ENCODE measurements at regions of chr10 and their contacts with region 1.

Region 1: DNA sequence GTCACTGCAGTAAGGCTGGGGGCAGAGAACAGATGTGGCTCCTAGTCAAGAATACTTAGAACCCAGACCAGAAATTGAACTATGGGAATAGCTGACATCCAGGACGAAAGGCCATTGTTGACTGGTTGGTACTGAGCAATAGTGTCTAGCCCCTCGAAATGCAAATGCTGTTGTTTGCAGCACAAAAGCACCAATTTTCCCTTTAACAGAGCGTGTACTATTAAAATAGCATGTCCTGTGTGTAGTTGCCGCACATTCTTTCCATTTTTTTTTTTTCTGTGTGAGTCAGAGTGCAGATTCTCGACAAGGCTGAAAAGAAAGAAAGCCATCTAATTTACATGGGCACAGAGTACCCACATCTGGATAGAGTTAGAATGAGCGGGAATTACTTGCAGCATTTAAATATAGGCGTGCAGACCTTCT is 302.4 kb downstream of the PTEN start:
- DNase-seq: no peak
- H3K4me3 ChIP-seq: peak overlapping the region in 1 of 2 donors; percentile 26
- H3K27ac ChIP-seq: peak overlapping the region; percentile 73 to 78
- H3K4me1 ChIP-seq: peaks cover 0 to 15% of the 10 kb centered on the region in 2 donors
- H3K27me3 ChIP-seq: no peaks in the 10 kb centered on the region
- CTCF ChIP-seq: no peak

Region 2: GRCh38 chr10:87961046-87961713 is 204.7 kb before region 1 on chr10:
- intact Hi-C with region 1: loop called (anchors 5 kb)
- DNase-seq: no peak
- H3K4me3 ChIP-seq: no peak overlapping the region
- H3K27ac ChIP-seq: peak overlapping the region; percentile 63 to 73
- H3K4me1 ChIP-seq: peaks cover 0 to 23% of the 10 kb centered on the region in 2 donors
- H3K27me3 ChIP-seq: no peaks in the 10 kb centered on the region
- CTCF ChIP-seq: no peak

Region 3: DNA sequence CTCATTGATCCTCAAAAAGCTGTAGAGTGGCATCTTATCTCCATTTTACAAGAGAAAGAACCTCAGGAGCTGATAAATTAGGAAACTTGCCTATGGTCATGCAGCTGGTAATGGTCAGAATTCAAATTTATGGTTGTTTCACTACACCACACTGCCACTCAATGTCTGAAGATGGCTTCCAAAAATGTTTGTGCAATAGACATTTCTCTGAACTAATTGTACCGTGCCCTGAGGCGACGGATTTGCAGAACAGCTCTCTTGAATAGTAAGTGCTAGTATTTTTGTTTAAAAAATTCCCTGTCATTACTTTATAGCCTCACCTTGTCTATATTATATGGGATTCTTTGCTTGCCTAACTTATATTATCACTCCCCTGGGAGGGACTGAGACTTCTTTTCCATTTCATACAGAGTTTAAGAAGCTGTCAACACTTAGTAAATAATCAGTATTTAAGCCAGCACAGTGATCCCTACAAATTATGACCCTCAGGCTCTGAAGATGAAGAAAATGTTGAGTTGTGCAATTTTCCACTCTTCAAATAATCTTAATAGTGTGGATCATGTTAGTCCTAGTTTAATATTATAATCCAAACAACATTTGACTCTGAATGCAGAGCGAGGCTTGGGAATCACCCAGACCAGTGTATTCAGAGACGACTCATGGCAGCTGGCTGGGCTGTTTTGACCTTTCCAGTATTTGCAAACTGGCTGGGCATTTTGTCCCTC is 44.1 kb after region 1 on chr10:
- intact Hi-C with region 1: no loop called
- DNase-seq: no peak
- H3K4me3 ChIP-seq: no peak overlapping the region
- H3K27ac ChIP-seq: no peak overlapping the region
- H3K4me1 ChIP-seq: no peaks in the 10 kb centered on the region
- H3K27me3 ChIP-seq: no peaks in the 10 kb centered on the region
- CTCF ChIP-seq: no peak

Region 4: GRCh38 chr10:88243836-88244730 is 78.2 kb after region 1 on chr10:
- intact Hi-C with region 1: loop called (anchors 5 kb)
- DNase-seq: peak in 1 of 2 donors; percentile 70
- H3K4me3 ChIP-seq: peak overlapping the region; percentile 29 to 31
- H3K27ac ChIP-seq: peak overlapping the region; percentile 58 to 68
- H3K4me1 ChIP-seq: peaks cover 5 to 32% of the 10 kb centered on the region in 2 donors
- H3K27me3 ChIP-seq: no peaks in the 10 kb centered on the region
- CTCF ChIP-seq: no peak

Region 5: DNA sequence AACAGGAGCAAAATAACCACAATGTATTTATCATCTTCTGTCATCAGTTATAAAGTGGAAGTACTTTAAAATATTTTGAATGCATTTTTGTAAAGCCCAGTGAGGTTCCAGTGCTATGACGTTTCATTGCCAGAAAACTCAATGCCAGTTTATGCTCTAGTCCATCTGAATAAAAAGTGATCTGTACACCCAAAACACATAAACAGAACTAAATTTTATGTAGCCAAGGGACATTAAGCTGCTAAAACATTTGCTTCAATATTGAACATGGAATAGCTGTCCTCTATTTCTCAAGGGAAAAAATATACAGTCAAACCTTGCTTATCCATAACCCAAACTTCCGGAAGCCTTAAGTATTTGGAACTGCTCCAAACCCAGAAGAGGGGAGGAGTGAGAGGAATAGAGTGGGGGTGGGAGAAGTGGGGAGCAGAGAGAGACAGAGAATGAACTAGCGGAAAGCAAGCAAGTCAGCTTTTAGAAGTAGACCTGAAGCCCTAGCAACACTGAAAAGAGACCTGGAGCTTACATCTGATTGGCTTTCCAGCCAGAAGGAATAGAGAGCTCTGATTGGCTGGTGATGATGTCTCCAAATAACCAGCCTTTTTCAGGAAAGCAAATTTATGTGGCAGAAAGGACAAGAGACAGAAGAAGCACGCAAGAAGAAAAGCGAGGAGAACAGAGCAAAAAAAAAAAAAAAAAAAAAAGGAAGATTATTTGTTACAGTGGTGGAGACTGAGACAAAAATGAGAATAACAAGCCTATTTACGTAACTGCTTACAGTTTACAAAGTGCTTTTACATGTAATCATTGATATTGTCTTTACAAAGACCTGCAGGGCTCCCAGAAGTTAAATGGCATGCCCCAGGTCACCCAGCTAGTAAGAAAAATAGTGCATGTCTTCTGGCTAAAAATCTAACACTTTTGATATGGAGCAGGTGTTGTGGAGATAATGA is 221.2 kb after region 1 on chr10:
- intact Hi-C with region 1: loop called (anchors 5 kb)
- DNase-seq: peak in 1 of 2 donors; percentile 71
- H3K4me3 ChIP-seq: peak overlapping the region; percentile 48 to 49
- H3K27ac ChIP-seq: peak overlapping the region; percentile 73 to 78
- H3K4me1 ChIP-seq: peaks cover 7 to 9% of the 10 kb centered on the region in 2 donors
- H3K27me3 ChIP-seq: no peaks in the 10 kb centered on the region
- CTCF ChIP-seq: no peak

Region 6: GRCh38 chr10:88499569-88500470 is 334.0 kb after region 1 on chr10:
- intact Hi-C with region 1: no loop called
- DNase-seq: no peak
- H3K4me3 ChIP-seq: no peak overlapping the region
- H3K27ac ChIP-seq: no peak overlapping the region
- H3K4me1 ChIP-seq: no peaks in the 10 kb centered on the region
- H3K27me3 ChIP-seq: no peaks in the 10 kb centered on the region
- CTCF ChIP-seq: no peak